GM12878 (cell line): ENCODE measurements at regions of chr14 and their contacts with region 1.

Region 1: DNA sequence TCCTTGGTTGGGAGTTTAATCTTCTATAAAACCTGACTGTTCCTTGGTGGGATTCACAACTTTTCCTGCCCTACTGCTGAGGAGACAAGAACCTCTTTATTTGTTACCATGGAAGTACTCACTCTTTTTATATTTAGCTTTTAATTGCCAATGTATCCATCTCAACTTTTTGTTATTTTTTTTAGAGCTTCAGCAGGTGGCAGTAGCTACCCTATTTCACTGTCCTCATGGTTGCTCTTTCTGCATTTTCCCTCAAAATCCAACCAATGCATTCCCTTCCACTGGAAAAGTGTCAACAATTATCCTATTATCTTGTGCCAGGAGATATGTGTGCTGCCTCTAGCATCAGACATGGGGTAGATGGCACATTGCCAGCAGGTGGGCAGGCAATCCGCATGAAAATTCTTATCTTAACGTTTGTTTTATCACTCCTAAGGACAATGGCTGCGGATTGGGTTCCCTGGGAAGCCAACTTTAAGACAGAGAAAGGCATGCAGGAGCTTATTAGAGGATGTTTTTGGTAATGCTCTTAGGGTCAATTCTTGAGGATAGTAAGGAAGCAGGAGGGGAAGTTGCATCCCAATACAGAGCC is 406.4 kb downstream of the SNAPC1 start:
- DNase-seq: no peak
- ATAC-seq: no peak
- H3K4me3 ChIP-seq: no peak overlapping the region
- H3K27ac ChIP-seq: no peak overlapping the region
- H3K4me1 ChIP-seq: no peaks in the 10 kb centered on the region
- H3K27me3 ChIP-seq: peaks cover 0 to 1% of the 10 kb centered on the region in 2 experiments; a peak in 1 of 4 replicates
- CTCF ChIP-seq: no peak
- EP300 ChIP-seq: no peak
- POLR2A ChIP-seq: no peak
- RAD21 ChIP-seq: no peak

Region 2: DNA sequence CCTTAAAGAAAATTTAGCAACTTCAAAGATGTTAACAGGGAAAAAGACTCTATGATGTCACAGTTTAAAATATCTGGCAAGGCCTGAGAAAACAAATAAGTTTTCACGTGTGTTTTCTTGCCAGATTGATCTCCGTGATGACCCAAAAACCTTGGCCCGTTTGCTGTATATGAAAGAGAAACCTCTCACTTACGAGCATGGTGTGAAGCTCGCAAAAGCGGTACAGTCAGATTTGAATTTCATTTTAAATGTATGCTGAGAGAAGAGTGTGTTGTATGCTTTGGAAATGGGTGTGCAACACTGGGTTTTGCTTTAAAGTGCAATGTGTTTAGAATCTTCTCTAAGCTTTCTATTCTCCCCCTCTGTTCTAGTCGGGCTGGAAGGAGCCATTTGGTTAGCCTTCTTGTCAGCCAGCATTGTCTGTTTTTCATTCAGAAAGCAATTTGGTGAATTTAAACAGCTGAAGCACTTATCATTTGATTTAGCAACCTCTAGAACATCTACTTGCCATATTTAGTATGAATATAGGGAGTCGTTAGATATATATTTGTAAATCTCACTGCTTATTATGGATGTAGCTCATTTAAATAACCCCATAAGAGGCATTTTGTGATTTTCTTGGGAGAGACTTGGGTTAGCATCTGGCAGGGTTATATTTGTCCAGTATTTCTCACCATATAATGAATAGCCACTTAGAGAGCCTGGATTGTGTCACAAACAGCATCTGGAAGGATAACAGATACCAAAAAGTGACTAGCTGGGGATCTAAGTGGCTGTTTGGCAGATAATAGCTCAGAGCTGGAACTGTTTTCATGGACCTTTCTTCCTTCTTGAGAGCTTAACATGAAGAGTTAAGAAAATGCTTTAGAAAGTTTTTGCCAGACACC is 1114.6 kb after region 1 on chr14:
- CTCF ChIA-PET with region 1: interaction called, 3 read pairs
- POLR2A ChIA-PET with region 1: no interaction called
- RAD21 ChIA-PET with region 1: no interaction called
- SMC1A ChIA-PET with region 1: no interaction called
- in situ Hi-C with region 1: loop called (anchors 5 kb)
- intact Hi-C with region 1: no loop called
- DNase-seq: no peak
- ATAC-seq: peak; percentile 80
- H3K4me3 ChIP-seq: 0 out of 2 replicates have a peak overlapping the region, but pooled peaks have one; percentile 11
- H3K27ac ChIP-seq: peak overlapping the region; percentile 27; the same call in 1 of the 2 replicates
- H3K4me1 ChIP-seq: peaks cover 13% of the 10 kb centered on the region
- H3K27me3 ChIP-seq: no peaks in the 10 kb centered on the region
- CTCF ChIP-seq: no peak
- EP300 ChIP-seq: no peak
- POLR2A ChIP-seq: no peak
- RAD21 ChIP-seq: no peak